H1 (cell line): ENCODE measurements at regions of chr15 and their contacts with region 1.

Region 1: DNA sequence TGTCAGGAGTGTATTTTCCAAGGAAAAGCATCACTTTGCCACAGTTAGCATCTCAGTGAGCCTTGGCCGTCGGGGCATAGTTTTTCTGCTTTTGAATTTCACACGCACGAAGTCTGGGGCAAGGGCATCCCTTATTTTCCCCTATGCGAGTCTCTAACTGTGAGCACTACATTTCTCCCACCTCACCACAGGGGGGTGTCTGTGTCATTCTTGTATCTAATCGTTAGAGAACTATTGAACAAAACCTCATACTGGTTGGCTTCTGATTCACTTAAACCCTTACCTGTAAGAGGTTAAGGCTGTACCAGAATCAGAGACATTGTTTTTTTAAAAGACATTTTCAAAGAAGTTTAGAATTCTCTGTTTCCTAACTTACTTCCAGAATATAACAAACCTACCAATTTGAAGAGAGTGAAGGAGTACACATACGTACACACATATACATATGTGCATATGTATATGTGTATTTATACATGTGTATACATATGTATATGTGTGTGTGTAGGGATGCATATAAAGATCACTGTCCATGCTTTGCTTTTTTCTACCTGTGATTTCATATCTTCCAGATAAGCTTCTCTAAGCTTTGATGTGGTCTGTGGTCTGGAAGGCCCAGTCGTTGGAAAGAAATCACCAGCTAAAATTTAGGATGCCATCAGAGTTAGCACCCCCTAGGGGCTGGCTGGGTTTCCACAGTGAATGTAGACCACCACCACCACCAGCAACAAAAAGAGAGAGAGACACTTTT is 49.4 kb downstream of the MYZAP start:
- DNase-seq: no peak
- H3K4me3 ChIP-seq: no peak overlapping the region
- H3K27ac ChIP-seq: no peak overlapping the region
- H3K4me1 ChIP-seq: no peaks in the 10 kb centered on the region
- H3K27me3 ChIP-seq: peaks cover 0 to 3% (median 0%) of the 10 kb centered on the region in 4 experiments; a peak in 2 of 7 replicates
- CTCF ChIP-seq: peak; percentile 50 to 61 (median 59)
- EP300 ChIP-seq: no peak
- POLR2A ChIP-seq: no peak
- RAD21 ChIP-seq: peak; percentile 22 to 45; a peak in 3 of 4 replicates

Region 2: GRCh38 chr15:57611938-57612337 is 29.2 kb before region 1 on chr15:
- CTCF ChIA-PET with region 1: interaction called, 11 read pairs
- POLR2A ChIA-PET with region 1: no interaction called
- DNase-seq: no peak
- H3K4me3 ChIP-seq: no peak overlapping the region
- H3K27ac ChIP-seq: no peak overlapping the region
- H3K4me1 ChIP-seq: no peaks in the 10 kb centered on the region; a peak in 2 of 7 replicates
- H3K27me3 ChIP-seq: peaks cover 0 to 2% (median 0%) of the 10 kb centered on the region in 4 experiments; a peak in 1 of 7 replicates
- CTCF ChIP-seq: peak; percentile 28 to 61 (median 40)
- EP300 ChIP-seq: no peak
- POLR2A ChIP-seq: no peak
- RAD21 ChIP-seq: peak; percentile 53 to 66

Region 3: GRCh38 chr15:57626713-57627440 is 14.2 kb before region 1 on chr15:
- CTCF ChIA-PET with region 1: interaction called, 32 read pairs
- POLR2A ChIA-PET with region 1: no interaction called
- DNase-seq: no peak
- H3K4me3 ChIP-seq: no peak overlapping the region
- H3K27ac ChIP-seq: no peak overlapping the region
- H3K4me1 ChIP-seq: 0 out of 7 replicates have a peak, but pooled peaks cover 0 to 3% (median 0%) of the 10 kb centered on the region in 4 experiments
- H3K27me3 ChIP-seq: no peaks in the 10 kb centered on the region
- CTCF ChIP-seq: no peak
- EP300 ChIP-seq: no peak
- POLR2A ChIP-seq: no peak
- RAD21 ChIP-seq: no peak

Region 4: DNA sequence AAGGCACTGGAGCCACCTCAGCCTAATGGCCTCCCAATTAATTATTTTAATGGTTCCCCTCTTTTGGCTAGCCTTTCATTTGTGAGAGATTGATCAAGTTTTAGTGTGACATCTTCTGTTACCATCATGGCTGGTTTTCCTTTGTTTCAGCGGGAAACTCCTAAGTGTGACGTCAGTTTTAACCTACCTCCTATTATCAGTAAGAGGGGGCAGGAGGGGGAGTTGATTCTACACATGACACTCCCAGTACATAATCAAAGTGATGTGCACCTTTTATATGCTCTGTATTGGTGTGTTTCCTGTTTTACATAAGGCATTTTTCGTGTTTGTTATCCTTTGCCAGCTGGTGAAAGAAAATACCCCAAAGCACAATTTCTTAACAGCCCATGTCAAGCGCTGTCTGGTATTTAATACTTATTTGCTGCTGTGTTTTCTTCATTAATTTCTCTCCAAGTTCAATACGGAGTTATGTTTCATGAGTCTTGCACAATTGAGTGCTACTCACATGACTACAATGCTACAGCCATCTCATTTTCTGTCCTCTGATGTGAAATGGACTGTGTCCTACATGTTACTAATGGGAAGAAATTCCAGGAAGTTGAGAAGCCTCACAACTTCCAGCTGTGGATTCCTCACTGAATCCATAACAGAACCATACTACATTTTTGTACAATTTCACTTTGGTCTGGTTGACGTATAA is 13.2 kb after region 1 on chr15:
- CTCF ChIA-PET with region 1: interaction called, 17 read pairs
- POLR2A ChIA-PET with region 1: no interaction called
- DNase-seq: no peak
- H3K4me3 ChIP-seq: no peak overlapping the region
- H3K27ac ChIP-seq: no peak overlapping the region
- H3K4me1 ChIP-seq: no peaks in the 10 kb centered on the region
- H3K27me3 ChIP-seq: no peaks in the 10 kb centered on the region
- CTCF ChIP-seq: no peak
- EP300 ChIP-seq: no peak
- POLR2A ChIP-seq: no peak
- RAD21 ChIP-seq: no peak

Region 5: GRCh38 chr15:57667171-57667849 is 26.2 kb after region 1 on chr15:
- CTCF ChIA-PET with region 1: interaction called, 10 read pairs
- POLR2A ChIA-PET with region 1: no interaction called
- DNase-seq: no peak
- H3K4me3 ChIP-seq: no peak overlapping the region
- H3K27ac ChIP-seq: no peak overlapping the region
- H3K4me1 ChIP-seq: no peaks in the 10 kb centered on the region
- H3K27me3 ChIP-seq: no peaks in the 10 kb centered on the region
- CTCF ChIP-seq: peak in 2 of 3 experiments; percentile 15 to 44; a peak in 2 of 4 replicates
- EP300 ChIP-seq: no peak
- POLR2A ChIP-seq: no peak
- RAD21 ChIP-seq: peak; percentile 45 to 57